ENCODE measurements at regions of chr22 and their contacts with region 1.

Region 1: GRCh38 chr22:21952586-21953571 is at the start of gene PPM1F:
- DNase-seq: peak; percentile 93
- H3K4me3 ChIP-seq: peak within 1 kb of the TSS; percentile 75 to 87 (median 76)
- H3K27ac ChIP-seq: peak within 1 kb of the TSS; percentile 66 to 86 (median 77)
- H3K4me1 ChIP-seq: peaks cover 37 to 49% (median 47%) of the 10 kb centered on the region in 4 donors
- H3K27me3 ChIP-seq: no peaks in the 10 kb centered on the region
- CTCF ChIP-seq: peak; percentile 95 to 99 (median 98)
- EP300 ChIP-seq: no peak
- POLR2A ChIP-seq: no peak
- total RNA-seq, gene PPM1F: 30.3 to 88.5 (median 74.1) TPM

Region 2: DNA sequence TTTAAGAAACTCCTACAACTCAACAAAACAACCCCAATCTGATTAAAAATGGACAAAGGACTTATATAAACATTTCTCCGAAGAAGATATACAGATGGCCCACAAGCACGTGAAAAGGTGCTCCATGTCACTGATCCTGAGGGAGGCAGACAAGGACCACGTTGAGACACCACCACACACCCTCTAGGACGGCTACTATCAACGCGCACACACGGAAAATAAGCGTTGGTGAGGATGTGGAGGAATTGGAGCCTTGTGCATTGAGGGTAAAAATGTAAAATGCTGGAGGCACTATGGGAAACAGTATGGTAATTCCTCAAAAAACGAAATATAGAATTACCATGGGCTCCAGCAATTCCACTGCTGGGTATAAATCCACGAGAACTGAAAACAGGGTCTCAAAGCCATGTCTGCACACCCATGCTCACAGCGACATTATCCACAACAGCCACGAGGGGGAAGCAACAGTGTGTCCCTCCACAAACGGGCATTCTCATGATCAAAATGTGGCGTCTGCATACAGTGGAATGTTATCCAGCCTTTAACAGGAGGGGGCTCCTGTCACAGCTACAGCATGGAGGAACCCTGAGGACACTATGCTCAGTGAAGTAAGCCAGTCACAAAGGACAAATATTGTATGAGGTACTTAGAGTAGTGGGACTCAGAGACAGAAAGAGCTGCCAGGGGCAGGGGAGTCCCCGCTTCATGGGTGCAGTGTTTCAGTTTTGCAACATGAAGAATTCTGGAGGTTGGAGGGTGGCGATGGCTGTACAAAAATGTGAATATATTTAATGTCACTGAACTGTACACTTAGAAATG is 239.8 kb before region 1 on chr22:
- intact Hi-C with region 1: loop called (anchors 2 kb)
- DNase-seq: no peak
- H3K4me3 ChIP-seq: peak overlapping the region; percentile 4 to 29 (median 18)
- H3K27ac ChIP-seq: peak overlapping the region in 1 of 4 donors; percentile 27
- H3K4me1 ChIP-seq: peaks cover 5 to 15% (median 10%) of the 10 kb centered on the region in 4 donors
- H3K27me3 ChIP-seq: no peaks in the 10 kb centered on the region
- CTCF ChIP-seq: peak; percentile 77 to 84 (median 80)
- EP300 ChIP-seq: no peak
- POLR2A ChIP-seq: no peak

Region 3: GRCh38 chr22:21938071-21938822 is 14.6 kb before region 1 on chr22:
- intact Hi-C with region 1: loop called (anchors 2 kb)
- DNase-seq: peak; percentile 98
- H3K4me3 ChIP-seq: peak overlapping the region; percentile 61 to 67 (median 66)
- H3K27ac ChIP-seq: peak overlapping the region; percentile 92 to 98 (median 94)
- H3K4me1 ChIP-seq: peaks cover 71 to 94% (median 79%) of the 10 kb centered on the region in 4 donors
- H3K27me3 ChIP-seq: no peaks in the 10 kb centered on the region
- CTCF ChIP-seq: peak; percentile 88 to 99 (median 99)
- EP300 ChIP-seq: no peak
- POLR2A ChIP-seq: no peak

Region 4: DNA sequence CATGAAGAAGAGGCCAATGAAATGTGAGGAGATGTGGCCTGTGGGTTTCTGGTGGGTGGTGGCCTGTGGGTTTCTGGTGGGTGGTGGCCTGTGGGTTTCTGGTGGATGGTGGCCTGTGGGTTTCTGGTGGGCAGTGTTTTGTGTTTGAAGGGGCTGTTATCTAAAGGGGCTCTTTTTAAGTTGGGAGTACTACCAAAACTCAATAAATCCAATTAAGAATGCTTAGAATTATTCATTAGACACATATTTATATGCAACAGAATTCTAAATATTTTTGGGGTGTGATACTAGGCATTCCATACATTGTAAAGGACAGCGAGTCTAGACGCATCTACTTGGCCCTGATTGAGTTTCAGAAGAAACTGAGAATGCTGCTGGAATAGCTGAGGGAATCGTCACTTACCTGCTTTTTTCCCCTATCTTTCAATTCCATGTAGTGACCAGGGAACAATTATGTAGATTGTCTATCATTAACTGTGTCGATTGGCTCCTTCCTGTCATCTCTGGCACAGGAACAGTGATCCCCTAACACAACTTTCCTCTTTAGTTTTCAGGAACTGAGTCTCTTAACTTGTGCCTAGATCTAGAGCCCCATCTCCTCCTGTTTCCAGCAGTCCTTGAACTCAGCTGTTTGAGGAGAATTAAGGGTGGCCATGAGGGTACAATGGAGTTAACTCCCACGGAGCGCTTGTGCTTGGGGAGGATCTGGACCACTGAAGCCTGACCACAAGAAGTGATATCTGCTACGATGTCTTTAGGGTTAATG is 67.0 kb after region 1 on chr22:
- intact Hi-C with region 1: no loop called
- DNase-seq: no peak
- H3K4me3 ChIP-seq: no peak overlapping the region
- H3K27ac ChIP-seq: no peak overlapping the region
- H3K4me1 ChIP-seq: peaks cover 0 to 5% (median 0%) of the 10 kb centered on the region in 4 donors
- H3K27me3 ChIP-seq: peaks cover 0 to 5% (median 0%) of the 10 kb centered on the region in 4 donors
- CTCF ChIP-seq: no peak
- EP300 ChIP-seq: no peak
- POLR2A ChIP-seq: no peak

Region 5: GRCh38 chr22:22123118-22123959 is 170.5 kb after region 1 on chr22:
- intact Hi-C with region 1: no loop called
- DNase-seq: peak; percentile 45
- H3K4me3 ChIP-seq: no peak overlapping the region
- H3K27ac ChIP-seq: no peak overlapping the region
- H3K4me1 ChIP-seq: no peaks in the 10 kb centered on the region
- H3K27me3 ChIP-seq: peaks cover 0 to 49% (median 2%) of the 10 kb centered on the region in 4 donors
- CTCF ChIP-seq: no peak
- EP300 ChIP-seq: no peak
- POLR2A ChIP-seq: no peak